CD4-positive, alpha-beta memory T cell (primary cell): ENCODE measurements at regions of chr18 and their contacts with region 1.

Region 1: GRCh38 chr18:63518178-63519012 is 23.8 kb upstream of the SERPINB12 start:
- DNase-seq: peak; percentile 44 to 57 (median 49)
- H3K4me3 ChIP-seq: no peak overlapping the region
- H3K4me3 Mint-ChIP-seq: no peak overlapping the region
- H3K27ac ChIP-seq: no peak overlapping the region
- H3K27ac Mint-ChIP-seq: no peak overlapping the region
- H3K4me1 ChIP-seq: no peaks in the 10 kb centered on the region
- H3K4me1 Mint-ChIP-seq: peaks cover 0 to 5% (median 4%) of the 10 kb centered on the region in 4 donors
- H3K27me3 ChIP-seq: peaks cover 3% of the 10 kb centered on the region
- H3K27me3 Mint-ChIP-seq: peaks cover 9 to 12% of the 10 kb centered on the region in 2 donors

Region 2: DNA sequence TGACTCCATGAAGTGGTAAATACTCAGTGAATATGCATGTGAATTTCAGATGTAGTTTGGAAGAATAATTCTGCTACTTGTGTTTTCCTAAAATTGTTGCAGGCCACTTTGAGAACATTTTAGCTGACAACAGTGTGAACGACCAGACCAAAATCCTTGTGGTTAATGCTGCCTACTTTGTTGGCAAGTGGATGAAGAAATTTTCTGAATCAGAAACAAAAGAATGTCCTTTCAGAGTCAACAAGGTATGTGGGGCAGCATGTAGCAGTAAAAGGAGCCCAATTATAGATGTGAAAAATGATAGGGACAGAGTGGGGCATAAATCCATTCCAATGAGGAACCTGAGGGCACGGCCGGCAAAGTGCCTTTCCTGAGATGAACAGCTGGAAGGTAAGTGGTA is 25.5 kb before region 1 on chr18:
- CTCF ChIA-PET with region 1: interaction called, 17 read pairs
- POLR2A ChIA-PET with region 1: no interaction called
- intact Hi-C with region 1: no loop called
- DNase-seq: no peak
- H3K4me3 ChIP-seq: no peak overlapping the region
- H3K4me3 Mint-ChIP-seq: no peak overlapping the region
- H3K27ac ChIP-seq: no peak overlapping the region
- H3K27ac Mint-ChIP-seq: no peak overlapping the region
- H3K4me1 ChIP-seq: no peaks in the 10 kb centered on the region
- H3K4me1 Mint-ChIP-seq: no peaks in the 10 kb centered on the region
- H3K27me3 ChIP-seq: no peaks in the 10 kb centered on the region
- H3K27me3 Mint-ChIP-seq: peaks cover 0 to 9% of the 10 kb centered on the region in 2 donors

Region 3: GRCh38 chr18:63528863-63529492 is 10.6 kb after region 1 on chr18:
- CTCF ChIA-PET with region 1: interaction called, 39 read pairs
- POLR2A ChIA-PET with region 1: no interaction called
- intact Hi-C with region 1: no loop called
- DNase-seq: no peak
- H3K4me3 ChIP-seq: no peak overlapping the region
- H3K4me3 Mint-ChIP-seq: no peak overlapping the region
- H3K27ac ChIP-seq: no peak overlapping the region
- H3K27ac Mint-ChIP-seq: no peak overlapping the region
- H3K4me1 ChIP-seq: no peaks in the 10 kb centered on the region
- H3K4me1 Mint-ChIP-seq: no peaks in the 10 kb centered on the region
- H3K27me3 ChIP-seq: no peaks in the 10 kb centered on the region
- H3K27me3 Mint-ChIP-seq: peaks cover 3 to 10% of the 10 kb centered on the region in 2 donors

Region 4: GRCh38 chr18:63936156-63936931 is 417.9 kb after region 1 on chr18:
- CTCF ChIA-PET with region 1: interaction called, 67 read pairs
- POLR2A ChIA-PET with region 1: no interaction called
- intact Hi-C with region 1: loop called (anchors 1 kb)
- DNase-seq: peak; percentile 34 to 61 (median 44)
- H3K4me3 ChIP-seq: peak overlapping the region; percentile 27 to 55
- H3K4me3 Mint-ChIP-seq: peak overlapping the region in 6 of 8 donors; percentile 69 to 83 (median 77)
- H3K27ac ChIP-seq: no peak overlapping the region
- H3K27ac Mint-ChIP-seq: no peak overlapping the region
- H3K4me1 ChIP-seq: peaks cover 14% of the 10 kb centered on the region
- H3K4me1 Mint-ChIP-seq: peaks cover 0 to 5% (median 2%) of the 10 kb centered on the region in 4 donors
- H3K27me3 ChIP-seq: peaks cover 5% of the 10 kb centered on the region
- H3K27me3 Mint-ChIP-seq: peaks cover 3 to 9% of the 10 kb centered on the region in 2 donors

Region 5: DNA sequence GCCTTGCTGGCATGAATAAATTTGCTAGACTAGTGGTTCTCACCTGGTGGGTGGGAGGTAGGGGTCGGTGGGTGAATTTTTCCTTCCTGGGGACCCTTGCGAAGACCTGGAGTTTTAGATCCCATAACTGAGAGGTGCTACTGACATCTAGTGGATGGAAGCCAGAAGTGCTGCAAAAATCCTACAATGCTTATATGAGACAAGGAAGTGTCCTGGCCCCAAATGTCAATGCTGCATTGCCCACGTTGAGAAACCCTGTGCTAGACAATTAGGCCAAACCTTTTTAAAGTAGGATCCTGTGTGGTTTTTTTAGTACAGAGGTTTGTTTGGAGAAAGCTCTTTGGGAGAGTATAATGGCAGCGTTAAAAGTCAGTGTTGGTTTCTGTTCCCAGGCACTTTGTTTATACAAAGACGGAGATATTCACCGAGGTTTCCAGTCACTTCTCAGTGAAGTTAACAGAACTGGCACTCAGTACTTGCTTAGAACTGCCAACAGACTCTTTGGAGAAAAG is 461.1 kb after region 1 on chr18:
- CTCF ChIA-PET with region 1: interaction called, 21 read pairs
- POLR2A ChIA-PET with region 1: no interaction called
- intact Hi-C with region 1: loop called (anchors 1 kb)
- DNase-seq: peak; percentile 38 to 49 (median 41)
- H3K4me3 ChIP-seq: no peak overlapping the region
- H3K4me3 Mint-ChIP-seq: peak overlapping the region in 3 of 8 donors; percentile 9 to 69 (median 15)
- H3K27ac ChIP-seq: no peak overlapping the region
- H3K27ac Mint-ChIP-seq: peak overlapping the region in 3 of 7 donors; percentile 50 to 71 (median 70)
- H3K4me1 ChIP-seq: peaks cover 5% of the 10 kb centered on the region
- H3K4me1 Mint-ChIP-seq: peaks cover 13 to 23% (median 15%) of the 10 kb centered on the region in 4 donors
- H3K27me3 ChIP-seq: no peaks in the 10 kb centered on the region
- H3K27me3 Mint-ChIP-seq: no peaks in the 10 kb centered on the region